Heart right ventricle (tissue), 16 donors: ENCODE measurements at regions of chr9 and their contacts with region 1.

Region 1: DNA sequence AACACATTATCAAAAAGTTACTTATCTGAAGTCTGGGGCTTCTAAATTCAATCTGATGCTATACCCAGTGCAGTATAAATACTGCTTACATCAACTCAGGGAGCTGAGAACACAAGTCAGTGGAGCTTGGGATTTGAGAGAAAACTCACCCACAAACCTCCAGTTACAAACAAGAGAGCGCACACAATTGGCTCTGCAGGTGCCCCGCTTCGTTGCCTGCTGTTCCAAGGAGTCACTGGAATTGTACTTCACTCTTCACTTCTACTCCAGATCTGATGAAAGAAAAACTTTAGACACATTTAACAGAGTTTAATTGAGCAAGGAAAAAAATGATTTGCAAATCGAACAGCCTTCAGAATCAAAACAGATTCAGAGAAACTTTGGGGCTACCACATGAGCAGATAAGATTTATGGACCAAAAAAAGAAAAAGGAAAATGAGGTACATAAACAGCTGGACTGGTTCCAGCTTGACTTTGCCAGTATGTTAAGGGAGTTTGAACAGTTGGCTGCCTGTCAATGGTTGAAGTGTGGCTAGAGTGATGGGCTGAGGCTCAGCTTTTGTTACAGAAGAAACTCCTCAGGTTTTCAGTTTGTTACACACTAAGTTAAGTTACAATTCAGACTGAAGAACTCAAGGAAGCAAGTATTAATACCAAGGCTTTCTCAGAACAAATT is 156.6 kb downstream of the AOPEP start:
- DNase-seq: peak in 1 of 2 donors; percentile 45
- ATAC-seq: peak in 4 of 8 donors; percentile 31 to 45 (median 40)
- H3K4me3 ChIP-seq: no peak overlapping the region
- H3K27ac ChIP-seq: peak overlapping the region in 7 of 10 donors; percentile 24 to 75 (median 61)
- H3K4me1 ChIP-seq: peaks cover 9 to 70% (median 53%) of the 10 kb centered on the region in 9 donors
- H3K27me3 ChIP-seq: no peaks in the 10 kb centered on the region
- CTCF ChIP-seq: no peak

Region 2: GRCh38 chr9:94799578-94800264 is 83.4 kb before region 1 on chr9:
- intact Hi-C with region 1: loop called in 1 of 10 experiments (anchors 10 kb)
- DNase-seq: no peak
- ATAC-seq: peak in 2 of 8 donors; percentile 39 to 50
- H3K4me3 ChIP-seq: no peak overlapping the region
- H3K27ac ChIP-seq: peak overlapping the region in 4 of 10 donors; percentile 51 to 70 (median 60)
- H3K4me1 ChIP-seq: peaks cover 4 to 36% (median 15%) of the 10 kb centered on the region in 9 donors
- H3K27me3 ChIP-seq: no peaks in the 10 kb centered on the region
- CTCF ChIP-seq: no peak